ENCODE measurements at regions of chr6 and their contacts with region 1.

Region 1: GRCh38 chr6:132122871-132123270 is 171.7 kb upstream of the CCN2 start:
- DNase-seq: no peak
- ATAC-seq: no peak
- H3K4me3 ChIP-seq: no peak overlapping the region
- H3K27ac ChIP-seq: no peak overlapping the region
- H3K4me1 ChIP-seq: no peaks in the 10 kb centered on the region
- H3K27me3 ChIP-seq: no peaks in the 10 kb centered on the region
- CTCF ChIP-seq: no peak

Region 2: DNA sequence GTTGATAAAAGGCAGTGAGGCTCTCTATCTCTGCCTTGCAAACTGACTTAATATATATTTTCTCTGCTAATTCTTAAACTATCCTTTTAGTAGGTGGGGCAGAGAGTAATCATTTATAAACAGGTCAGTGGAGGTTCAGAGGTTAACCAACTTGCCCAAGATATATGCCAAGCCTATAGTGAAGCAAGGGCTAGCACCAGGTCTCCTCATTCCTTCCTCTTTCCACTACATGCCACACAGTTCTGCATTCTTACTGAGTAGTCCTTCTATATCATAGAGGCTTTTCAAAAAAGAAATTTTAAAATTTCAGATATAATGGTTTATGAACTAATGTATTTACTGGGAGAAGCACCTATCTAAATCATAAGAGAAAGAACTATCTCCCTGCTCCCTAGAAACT is 541.3 kb before region 1 on chr6:
- intact Hi-C with region 1: no loop called
- DNase-seq: no peak
- ATAC-seq: peak; percentile 72
- H3K4me3 ChIP-seq: no peak overlapping the region
- H3K27ac ChIP-seq: no peak overlapping the region
- H3K4me1 ChIP-seq: no peaks in the 10 kb centered on the region
- H3K27me3 ChIP-seq: no peaks in the 10 kb centered on the region
- CTCF ChIP-seq: no peak

Region 3: GRCh38 chr6:131966443-131966842 is 156.4 kb before region 1 on chr6:
- intact Hi-C with region 1: loop called (anchors 5 kb)
- DNase-seq: no peak
- ATAC-seq: peak; percentile 85
- H3K4me3 ChIP-seq: no peak overlapping the region
- H3K27ac ChIP-seq: no peak overlapping the region
- H3K4me1 ChIP-seq: no peaks in the 10 kb centered on the region
- H3K27me3 ChIP-seq: no peaks in the 10 kb centered on the region
- CTCF ChIP-seq: no peak

Region 4: DNA sequence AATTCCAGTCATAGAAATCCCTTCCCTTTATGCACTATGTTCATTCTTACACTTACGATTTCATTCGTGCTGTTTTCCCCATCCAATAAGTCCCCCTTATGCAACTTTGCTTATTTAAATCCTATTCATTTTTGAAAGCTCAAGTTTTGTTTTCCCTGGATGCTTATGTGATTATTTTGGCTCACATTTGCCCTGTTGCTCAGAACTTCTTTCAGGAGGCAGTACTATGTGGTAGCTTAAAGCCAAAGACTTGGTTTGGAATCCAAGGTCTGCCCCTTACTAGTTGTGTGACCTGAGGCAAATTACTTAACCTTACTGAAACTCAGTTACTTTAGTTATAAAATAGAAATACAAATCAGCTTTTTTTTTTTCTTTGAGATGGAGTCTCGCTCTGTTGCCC is 218.8 kb after region 1 on chr6:
- intact Hi-C with region 1: no loop called
- DNase-seq: no peak
- ATAC-seq: no peak
- H3K4me3 ChIP-seq: no peak overlapping the region
- H3K27ac ChIP-seq: no peak overlapping the region
- H3K4me1 ChIP-seq: no peaks in the 10 kb centered on the region
- H3K27me3 ChIP-seq: no peaks in the 10 kb centered on the region
- CTCF ChIP-seq: no peak

Measured in upper lobe of right lung (tissue), 1 donor.